Activated CD4-positive, alpha-beta T cell treated with anti-CD3 and anti-CD28 coated beads, Interleukin-2, amount 10 ng/mL, durations not matched to agents 24 days and 14 days (primary cell): ENCODE measurements at regions of chr17 and their contacts with region 1.

Region 1: GRCh38 chr17:7306911-7307686 is at the start of gene EIF5A:
- DNase-seq: peak; percentile 100
- H3K4me3 Mint-ChIP-seq: peak within 1 kb of the TSS; percentile 90
- H3K27ac Mint-ChIP-seq: peak within 1 kb of the TSS; percentile 99
- H3K4me1 Mint-ChIP-seq: peaks cover 40% of the 10 kb centered on the region
- H3K27me3 Mint-ChIP-seq: peaks cover 5% of the 10 kb centered on the region
- total RNA-seq, gene EIF5A: 1,303 and 1,327 TPM in 2 replicates

Region 2: DNA sequence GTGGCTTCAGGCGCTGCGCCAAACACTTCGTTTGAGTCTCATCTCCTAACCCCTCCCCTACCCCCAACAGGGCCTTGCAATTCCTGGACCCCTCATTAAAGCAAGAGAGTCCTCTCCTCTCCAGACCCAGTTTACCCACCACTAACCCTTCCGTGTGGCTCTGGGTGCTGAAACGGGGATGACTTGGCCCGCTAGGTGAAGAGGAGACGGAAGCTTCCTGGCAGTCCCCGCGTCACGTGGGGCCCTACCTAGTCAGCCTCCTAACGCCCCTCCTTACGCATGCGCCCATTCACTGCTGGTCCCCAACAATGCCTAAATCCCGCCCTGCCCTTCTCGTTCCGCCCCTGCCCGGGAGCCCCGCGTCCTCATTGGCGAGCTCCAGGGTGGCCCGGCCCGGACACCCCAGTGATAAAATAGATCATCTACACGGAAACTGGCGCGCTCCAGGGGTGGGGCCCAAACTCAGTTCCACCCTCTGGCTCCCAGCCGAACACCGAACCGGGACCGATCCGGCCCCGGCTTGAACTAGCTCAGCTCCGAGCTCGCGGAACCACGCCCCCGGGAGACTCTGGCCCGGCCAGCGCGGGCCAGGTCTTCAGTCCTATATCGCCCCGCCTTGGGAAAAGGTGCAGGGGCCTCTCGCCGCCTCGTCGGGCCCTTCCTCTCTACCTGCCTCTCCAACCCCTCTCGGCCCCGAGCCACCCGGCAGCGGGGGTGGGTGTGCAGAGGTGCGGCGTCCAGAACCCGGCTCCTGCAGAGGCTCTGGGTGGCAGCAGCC is 271.3 kb before region 1 on chr17 and contains the start of gene SLC16A13:
- intact Hi-C with region 1: loop called (anchors 5 kb)
- DNase-seq: peak; percentile 100
- H3K4me3 Mint-ChIP-seq: peak within 1 kb of the TSS; percentile 98
- H3K27ac Mint-ChIP-seq: peak within 1 kb of the TSS; percentile 99
- H3K4me1 Mint-ChIP-seq: peaks cover 51% of the 10 kb centered on the region
- H3K27me3 Mint-ChIP-seq: no peaks in the 10 kb centered on the region
- total RNA-seq, gene SLC16A13: 12.4 and 13.5 TPM in 2 replicates

Region 3: DNA sequence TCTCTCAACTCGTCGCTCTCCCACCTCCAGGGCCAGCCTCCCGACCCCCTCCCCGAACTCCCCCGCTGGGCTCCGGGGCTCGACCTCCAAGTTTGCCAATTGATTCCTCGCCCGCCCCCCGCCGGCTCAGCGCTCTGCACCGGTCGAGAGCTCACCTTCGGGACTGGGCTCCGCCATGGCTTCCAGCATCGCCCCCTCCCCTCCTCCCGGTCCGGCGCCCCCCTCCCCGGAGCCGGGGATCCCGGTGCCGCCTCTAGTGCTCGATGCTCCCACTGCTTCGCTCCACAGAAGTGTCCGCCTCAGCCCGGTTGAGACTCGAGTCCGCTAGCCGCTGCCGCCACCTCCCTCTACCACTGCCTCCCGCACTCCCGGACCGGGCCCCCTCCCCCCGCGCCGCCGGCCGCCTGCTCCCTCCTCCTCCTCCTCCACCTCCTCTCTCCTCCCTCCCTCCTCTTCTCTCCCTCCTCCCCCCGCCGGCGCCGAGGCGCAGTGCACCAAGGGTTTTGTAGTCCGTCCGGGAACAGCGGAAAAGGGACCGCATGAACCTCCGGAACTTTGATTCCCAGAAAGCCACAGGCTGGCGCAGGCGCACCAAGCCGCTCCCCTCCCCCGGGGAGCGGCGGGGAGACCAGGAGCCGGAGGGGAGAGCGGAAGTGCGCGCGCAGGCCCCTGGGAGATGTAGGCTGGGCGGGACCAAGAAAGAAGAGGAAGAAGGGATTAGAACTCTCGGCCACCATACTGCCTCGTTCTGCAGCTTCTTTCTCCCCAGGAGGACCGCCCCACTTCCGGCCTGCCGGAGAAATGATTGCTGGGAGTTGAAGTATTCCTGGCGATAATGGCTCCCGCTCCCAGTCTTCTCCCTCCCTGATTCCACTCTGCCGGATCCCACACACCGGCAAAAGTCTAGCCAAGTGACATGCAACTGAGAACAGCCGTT is 67.7 kb before region 1 on chr17 and contains the start of gene PHF23:
- intact Hi-C with region 1: loop called (anchors 1 kb)
- DNase-seq: peak; percentile 99
- H3K4me3 Mint-ChIP-seq: peak within 1 kb of the TSS; percentile 99
- H3K27ac Mint-ChIP-seq: peak within 1 kb of the TSS; percentile 95
- H3K4me1 Mint-ChIP-seq: peaks cover 59% of the 10 kb centered on the region
- H3K27me3 Mint-ChIP-seq: peaks cover 2% of the 10 kb centered on the region
- total RNA-seq, gene PHF23: 46.2 and 51.7 TPM in 2 replicates

Region 4: DNA sequence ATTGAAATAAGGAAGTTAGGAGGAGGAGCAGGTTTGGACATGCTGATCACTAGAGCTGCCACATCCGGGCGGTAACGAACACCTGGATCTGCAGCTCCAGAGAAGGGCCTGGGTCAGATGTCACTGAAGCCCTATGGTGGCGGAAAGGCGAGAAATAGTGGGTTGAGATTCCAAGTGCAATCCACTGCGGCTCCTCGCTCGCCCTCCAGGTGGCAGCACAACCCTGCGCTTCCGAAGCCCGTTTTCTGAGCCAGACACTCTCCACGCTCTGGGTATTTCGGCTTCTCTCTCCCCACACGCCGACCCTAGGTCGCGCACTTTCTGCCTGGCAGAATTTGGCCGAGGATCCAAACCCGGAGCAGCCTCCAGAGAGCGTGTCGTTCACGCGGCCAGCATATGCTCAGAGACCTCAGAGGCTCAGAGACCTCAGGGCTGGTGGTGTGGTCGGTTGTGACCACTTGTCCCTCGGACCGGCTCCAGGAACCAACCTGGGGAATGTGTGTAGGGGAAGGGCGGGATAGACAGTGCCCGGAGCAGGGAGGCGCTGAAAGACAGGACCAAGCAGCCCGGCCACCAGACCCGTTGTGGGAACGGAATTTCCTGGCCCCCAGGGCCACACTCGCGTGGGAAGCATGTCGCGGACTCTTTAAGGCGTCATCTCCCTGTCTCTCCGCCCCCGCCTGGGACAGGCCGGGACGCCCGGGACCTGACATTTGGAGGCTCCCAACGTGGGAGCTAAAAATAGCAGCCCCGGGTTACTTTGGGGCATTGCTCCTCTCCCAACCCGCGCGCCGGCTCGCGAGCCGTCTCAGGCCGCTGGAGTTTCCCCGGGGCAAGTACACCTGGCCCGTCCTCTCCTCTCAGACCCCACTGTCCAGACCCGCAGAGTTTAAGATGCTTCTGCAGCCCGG is 26.3 kb before region 1 on chr17:
- intact Hi-C with region 1: loop called (anchors 1 kb)
- DNase-seq: peak; percentile 93
- H3K4me3 Mint-ChIP-seq: peak overlapping the region; percentile 84
- H3K27ac Mint-ChIP-seq: peak overlapping the region; percentile 76
- H3K4me1 Mint-ChIP-seq: peaks cover 10% of the 10 kb centered on the region
- H3K27me3 Mint-ChIP-seq: peaks cover 32% of the 10 kb centered on the region

Region 5: DNA sequence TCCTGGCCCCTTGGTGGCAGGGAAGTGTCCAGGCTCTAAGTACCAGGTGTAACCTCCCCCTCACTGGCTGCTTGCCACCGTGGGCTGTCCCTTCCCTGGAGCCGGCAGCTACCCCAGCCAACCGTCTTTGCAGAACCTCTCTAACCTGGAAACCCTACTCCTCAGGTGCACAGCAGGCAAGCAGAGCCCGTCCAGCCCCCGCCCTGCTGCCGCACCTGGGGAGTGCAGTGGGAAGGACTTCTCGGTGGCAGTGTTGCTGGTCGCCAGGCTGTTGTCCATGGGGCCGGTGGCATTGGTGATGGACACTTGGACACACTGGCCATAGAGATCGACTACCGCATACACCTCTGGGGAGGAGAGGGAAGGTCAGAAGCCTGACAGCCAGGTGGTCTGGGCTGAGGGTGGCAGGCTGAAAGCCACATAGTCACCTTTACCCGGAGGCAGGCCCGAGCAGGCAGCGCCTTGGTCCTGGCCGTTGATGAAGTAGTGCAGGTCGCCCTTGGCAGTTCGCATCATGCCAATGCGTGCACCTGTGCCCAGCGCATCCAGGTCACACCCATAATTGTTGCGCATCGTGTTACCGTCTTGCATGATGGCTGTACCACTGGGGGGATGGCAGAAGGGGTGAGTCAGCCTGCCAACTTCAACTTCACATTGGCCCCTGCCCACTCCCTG is 15.6 kb after region 1 on chr17:
- intact Hi-C with region 1: no loop called
- DNase-seq: no peak
- H3K4me3 Mint-ChIP-seq: no peak overlapping the region
- H3K27ac Mint-ChIP-seq: no peak overlapping the region
- H3K4me1 Mint-ChIP-seq: peaks cover 8% of the 10 kb centered on the region
- H3K27me3 Mint-ChIP-seq: no peaks in the 10 kb centered on the region

Region 6: DNA sequence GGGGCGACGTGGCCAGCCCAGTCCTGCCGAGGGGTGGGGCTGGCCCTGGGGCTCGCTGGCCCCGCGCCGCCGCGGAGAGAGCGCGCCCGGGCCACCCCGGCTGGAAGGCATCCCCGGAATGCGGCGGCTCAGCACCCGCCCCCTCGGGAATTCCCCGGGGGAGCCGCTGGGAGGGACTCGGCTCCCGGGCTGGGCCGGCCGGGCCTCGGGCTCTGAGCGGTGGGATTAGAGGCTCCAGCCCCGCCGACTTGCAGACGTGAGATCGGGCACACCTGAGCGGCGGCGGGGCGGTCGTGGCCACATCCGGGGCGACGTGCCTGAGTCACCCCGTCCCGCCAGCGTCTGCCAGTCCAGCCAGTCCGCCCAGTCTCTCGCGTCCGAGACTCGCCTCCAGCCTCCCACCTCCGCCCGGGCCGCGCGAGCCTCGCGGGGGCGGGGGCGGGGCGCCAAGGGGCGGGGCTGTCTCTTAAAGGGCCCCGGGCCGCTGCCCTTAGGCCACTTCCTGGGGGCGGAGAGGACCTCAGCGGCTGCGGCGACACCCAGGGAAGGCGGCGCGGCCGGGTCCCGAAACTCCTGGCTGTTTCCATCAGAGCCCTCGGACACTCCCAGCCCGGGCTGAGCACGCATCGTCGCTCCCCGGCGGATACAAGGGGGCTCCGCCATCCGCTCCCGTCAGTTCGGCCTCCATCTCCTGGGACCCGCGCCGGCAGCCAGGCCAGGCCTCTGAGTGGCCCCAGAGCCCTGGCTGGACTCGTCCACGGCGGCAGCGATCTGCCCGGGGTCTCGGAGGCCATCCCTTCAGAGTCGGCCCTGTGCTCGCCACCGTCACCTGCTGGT is 44.8 kb after region 1 on chr17 and contains the start of gene KCTD11:
- intact Hi-C with region 1: loop called (anchors 1 kb)
- DNase-seq: peak; percentile 94
- H3K4me3 Mint-ChIP-seq: peak within 1 kb of the TSS; percentile 88
- H3K27ac Mint-ChIP-seq: peak within 1 kb of the TSS; percentile 92
- H3K4me1 Mint-ChIP-seq: peaks cover 33% of the 10 kb centered on the region
- H3K27me3 Mint-ChIP-seq: no peaks in the 10 kb centered on the region
- total RNA-seq, gene KCTD11: 7.0 and 7.6 TPM in 2 replicates

Region 7: GRCh38 chr17:7466639-7467341 is 159.7 kb after region 1 on chr17:
- intact Hi-C with region 1: no loop called
- DNase-seq: peak; percentile 51
- H3K4me3 Mint-ChIP-seq: no peak overlapping the region
- H3K27ac Mint-ChIP-seq: peak overlapping the region; percentile 16
- H3K4me1 Mint-ChIP-seq: peaks cover 4% of the 10 kb centered on the region
- H3K27me3 Mint-ChIP-seq: no peaks in the 10 kb centered on the region

Region 8: DNA sequence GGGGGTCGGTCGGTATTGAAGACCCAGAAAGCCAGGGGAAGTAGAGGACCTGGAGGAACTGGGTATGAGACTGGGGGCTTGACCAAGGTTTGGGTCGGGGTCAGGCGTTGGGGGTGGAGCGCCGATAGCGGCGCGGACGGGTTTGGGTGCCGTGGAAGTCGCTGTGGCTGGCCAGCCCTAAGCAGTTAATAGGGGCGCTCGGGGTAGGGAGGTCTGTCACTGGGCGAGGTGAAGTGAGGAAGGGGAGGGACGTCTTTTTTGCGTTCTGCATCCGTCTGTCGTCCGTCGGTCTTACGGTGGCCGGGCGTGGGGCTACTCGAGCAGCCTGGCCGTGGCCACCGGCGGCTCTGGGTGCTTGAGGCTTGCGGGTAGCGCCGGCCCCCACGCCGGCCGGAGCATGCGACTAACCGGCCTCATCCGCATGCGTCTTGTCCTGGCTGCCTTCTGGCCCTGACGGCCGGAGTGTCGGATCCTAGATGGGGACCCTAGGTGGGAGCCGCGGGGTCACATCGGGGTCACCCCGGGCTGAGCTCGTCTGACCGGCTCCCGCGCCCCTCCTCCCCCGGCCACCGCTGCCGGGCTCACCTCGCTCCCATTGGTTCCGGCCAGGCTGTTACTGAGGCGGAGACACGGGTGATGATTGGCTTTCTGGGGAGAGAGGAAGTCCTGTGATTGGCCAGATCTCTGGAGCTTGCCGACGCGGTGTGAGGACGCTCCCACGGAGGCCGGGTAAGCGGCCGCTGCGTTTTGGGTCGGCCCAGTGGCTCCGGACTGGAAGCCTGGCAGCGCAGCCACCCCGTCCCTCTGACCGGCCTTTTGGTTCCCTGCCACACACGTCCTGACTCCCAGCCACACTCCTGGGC is 537.4 kb after region 1 on chr17:
- intact Hi-C with region 1: loop called (anchors 2 kb)
- DNase-seq: peak; percentile 96
- H3K4me3 Mint-ChIP-seq: peak overlapping the region; percentile 99
- H3K27ac Mint-ChIP-seq: peak overlapping the region; percentile 100
- H3K4me1 Mint-ChIP-seq: peaks cover 37% of the 10 kb centered on the region
- H3K27me3 Mint-ChIP-seq: peaks cover 2% of the 10 kb centered on the region